ENCODE measurements at regions of chr3 and their contacts with region 1.

Region 1: DNA sequence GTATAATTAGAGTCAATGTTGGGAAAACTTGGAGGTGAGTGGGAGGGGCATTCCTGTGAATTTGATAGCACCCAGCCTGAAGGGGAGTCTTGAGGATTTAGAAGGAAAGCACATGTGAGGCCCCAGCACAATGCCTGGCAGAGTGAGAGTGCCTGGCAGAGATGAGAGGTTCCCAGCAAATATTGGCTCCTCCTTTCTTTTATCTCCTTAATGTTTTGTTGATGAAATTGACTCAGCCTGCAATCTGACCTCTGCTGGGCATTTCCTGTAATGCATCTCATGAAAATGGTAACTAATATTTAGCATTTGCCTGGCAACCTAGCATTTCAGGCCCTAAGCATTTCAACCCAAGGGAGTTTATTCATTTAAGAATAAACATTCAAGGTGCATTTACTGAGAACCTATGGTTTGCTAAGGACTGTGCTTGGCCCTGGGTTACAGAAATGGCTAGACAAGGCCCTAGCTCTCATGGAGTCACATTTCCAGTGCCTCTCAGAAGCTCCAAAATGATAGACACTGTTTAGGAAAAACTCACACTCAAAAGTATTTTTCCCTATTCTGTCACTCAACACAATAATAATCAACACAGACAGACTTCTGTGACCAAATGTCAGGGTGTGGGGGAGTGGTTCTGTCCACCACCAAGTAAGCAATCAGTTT is 19.0 kb downstream of the PDHB start:
- DNase-seq: peak; percentile 54
- CTCF ChIP-seq: peak; percentile 65

Region 2: GRCh38 chr3:58324391-58325390 is 90.0 kb before region 1 on chr3:
- CTCF ChIA-PET with region 1: interaction called, 37 read pairs
- POLR2A ChIA-PET with region 1: no interaction called
- DNase-seq: no peak
- CTCF ChIP-seq: no peak

Region 3: DNA sequence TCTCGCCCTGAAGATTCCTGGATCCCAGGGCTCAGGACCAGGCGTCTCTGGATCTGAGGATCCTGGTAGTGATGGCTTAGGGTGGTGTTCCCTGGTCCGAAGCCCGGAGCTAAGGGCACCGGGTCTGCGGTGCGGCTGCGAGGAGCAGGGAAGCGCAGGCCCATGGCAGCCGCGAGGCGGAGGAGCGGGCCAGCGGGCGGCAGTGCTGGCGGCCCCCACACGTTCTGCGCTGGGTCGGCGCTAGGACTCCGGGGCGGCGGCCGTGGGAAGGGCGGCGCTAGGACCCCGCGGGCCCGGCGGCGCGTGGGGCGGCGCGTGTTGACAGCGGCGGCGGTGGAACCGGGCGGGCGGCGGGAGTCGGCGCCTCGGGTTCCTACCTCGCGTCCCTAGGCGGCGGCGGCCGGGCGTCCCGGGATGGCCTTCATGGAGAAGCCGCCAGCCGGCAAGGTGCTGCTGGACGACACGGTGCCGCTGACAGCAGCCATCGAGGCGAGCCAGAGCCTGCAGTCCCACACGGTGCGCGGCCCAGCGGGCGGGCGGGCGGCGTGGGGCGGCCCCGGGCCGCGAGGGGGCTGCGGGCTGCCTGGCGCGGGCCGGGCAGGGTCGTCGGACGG is 82.0 kb before region 1 on chr3 and contains the start of gene PXK:
- CTCF ChIA-PET with region 1: interaction called, 15 read pairs
- POLR2A ChIA-PET with region 1: no interaction called
- DNase-seq: peak; percentile 84
- CTCF ChIP-seq: peak; percentile 41

Region 4: GRCh38 chr3:58392181-58392580 is 22.5 kb before region 1 on chr3:
- CTCF ChIA-PET with region 1: interaction called, 11 read pairs
- POLR2A ChIA-PET with region 1: no interaction called
- DNase-seq: no peak
- CTCF ChIP-seq: no peak

Region 5: DNA sequence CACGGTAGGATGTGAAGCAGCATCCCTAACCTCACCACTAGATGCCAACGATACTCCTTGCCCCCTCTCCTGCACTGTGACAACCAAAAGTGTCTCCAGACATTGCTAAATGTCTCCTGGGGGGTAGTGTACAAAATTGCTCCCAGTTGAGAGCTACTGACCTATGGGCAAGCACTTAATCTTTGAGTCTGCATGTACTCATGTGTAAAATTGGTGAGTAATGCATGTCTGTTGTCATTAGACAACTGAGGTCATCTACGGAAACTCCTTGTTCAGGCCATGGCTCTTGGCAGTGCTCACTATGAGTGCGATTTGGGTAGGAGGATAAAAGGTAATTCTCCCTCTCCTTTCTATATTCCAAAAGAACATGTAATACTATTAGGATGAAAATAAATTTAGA is 10.3 kb before region 1 on chr3:
- CTCF ChIA-PET with region 1: interaction called, 28 read pairs
- POLR2A ChIA-PET with region 1: no interaction called
- DNase-seq: no peak
- CTCF ChIP-seq: no peak

Region 6: DNA sequence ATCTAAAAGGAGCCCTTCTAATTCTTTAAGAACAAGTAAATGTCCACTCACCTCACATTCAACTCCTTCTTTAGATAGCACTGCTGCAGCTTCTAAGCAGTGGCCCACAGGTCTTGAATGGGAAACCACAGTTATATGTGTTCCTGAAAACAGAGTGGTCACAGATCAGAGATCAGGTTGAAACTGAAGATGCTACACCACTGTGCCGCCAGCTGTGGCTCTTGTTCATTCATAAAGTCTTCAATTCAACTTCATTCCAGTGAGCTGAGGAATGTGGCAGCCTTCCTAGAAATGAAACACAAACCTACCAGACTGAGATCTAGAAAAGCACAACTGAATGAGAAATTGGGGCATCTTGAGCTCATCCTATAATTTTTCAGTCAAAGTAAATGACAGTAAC is 15.0 kb after region 1 on chr3:
- CTCF ChIA-PET with region 1: interaction called, 20 read pairs
- POLR2A ChIA-PET with region 1: no interaction called
- DNase-seq: peak; percentile 32
- CTCF ChIP-seq: no peak

Measured in GM10248 (cell line).